MCF 10A (cell line): ENCODE measurements at regions of chr7 and their contacts with region 1.

Region 1: DNA sequence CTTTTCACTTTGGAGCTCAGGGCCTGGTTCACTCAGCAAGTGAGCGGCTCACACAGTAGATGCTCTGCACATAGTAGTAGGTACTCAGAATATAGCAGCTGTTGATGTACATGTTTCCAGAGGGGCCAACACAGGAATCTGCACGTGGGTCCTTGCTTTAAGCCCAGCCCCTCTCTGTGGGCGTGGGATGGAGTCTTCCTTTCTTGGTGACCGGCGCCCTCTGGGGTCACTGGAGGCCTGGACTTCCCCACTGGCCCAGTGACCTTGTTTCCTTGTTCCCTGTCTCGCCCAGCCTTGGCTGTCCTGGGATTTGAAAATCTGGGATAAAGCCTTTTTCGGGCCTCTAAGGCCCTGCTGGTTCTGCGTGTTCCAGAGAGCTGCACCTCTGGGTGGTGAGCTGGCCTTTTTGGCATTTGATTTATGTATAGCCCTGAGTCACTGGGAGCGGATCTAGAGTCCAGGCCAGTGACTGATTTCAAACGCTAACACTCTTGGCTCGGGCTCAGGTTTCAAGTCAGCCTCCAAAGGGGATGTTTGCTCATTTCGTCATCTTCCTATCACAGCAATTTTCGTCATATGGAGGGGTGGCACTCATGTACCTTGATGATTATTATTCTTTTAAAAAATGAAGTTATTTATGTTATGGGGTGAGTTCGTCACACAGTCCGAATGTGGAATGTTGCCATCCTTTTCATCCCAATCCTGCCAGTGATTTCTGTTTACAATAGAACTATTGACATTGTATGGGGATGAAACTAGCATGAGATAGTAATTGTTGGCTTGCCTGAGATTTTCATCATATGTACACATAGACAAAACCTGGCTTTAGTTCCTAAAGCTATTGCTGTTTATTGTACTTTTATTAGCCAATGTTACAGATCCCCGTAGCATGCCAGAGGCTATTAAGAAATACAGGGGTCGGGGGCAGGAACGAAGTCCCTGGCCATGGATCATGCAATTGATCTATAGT is 65.5 kb downstream of the CUX1 start:
- DNase-seq: peak; percentile 100
- H3K4me3 Mint-ChIP-seq: peak overlapping the region; percentile 41
- H3K27ac Mint-ChIP-seq: peak overlapping the region; percentile 99
- H3K4me1 Mint-ChIP-seq: peaks cover 30% of the 10 kb centered on the region
- H3K27me3 Mint-ChIP-seq: no peaks in the 10 kb centered on the region
- CTCF ChIP-seq: no peak

Region 2: GRCh38 chr7:101815835-101816493 is 66.9 kb before region 1 on chr7:
- CTCF ChIA-PET with region 1: interaction called, 3 read pairs
- POLR2A ChIA-PET with region 1: interaction called, 6 read pairs
- intact Hi-C with region 1: loop called (anchors 2 kb)
- DNase-seq: peak; percentile 79
- H3K4me3 Mint-ChIP-seq: peak overlapping the region; percentile 78
- H3K27ac Mint-ChIP-seq: no peak overlapping the region
- H3K4me1 Mint-ChIP-seq: peaks cover 21% of the 10 kb centered on the region
- H3K27me3 Mint-ChIP-seq: no peaks in the 10 kb centered on the region
- CTCF ChIP-seq: no peak

Region 3: DNA sequence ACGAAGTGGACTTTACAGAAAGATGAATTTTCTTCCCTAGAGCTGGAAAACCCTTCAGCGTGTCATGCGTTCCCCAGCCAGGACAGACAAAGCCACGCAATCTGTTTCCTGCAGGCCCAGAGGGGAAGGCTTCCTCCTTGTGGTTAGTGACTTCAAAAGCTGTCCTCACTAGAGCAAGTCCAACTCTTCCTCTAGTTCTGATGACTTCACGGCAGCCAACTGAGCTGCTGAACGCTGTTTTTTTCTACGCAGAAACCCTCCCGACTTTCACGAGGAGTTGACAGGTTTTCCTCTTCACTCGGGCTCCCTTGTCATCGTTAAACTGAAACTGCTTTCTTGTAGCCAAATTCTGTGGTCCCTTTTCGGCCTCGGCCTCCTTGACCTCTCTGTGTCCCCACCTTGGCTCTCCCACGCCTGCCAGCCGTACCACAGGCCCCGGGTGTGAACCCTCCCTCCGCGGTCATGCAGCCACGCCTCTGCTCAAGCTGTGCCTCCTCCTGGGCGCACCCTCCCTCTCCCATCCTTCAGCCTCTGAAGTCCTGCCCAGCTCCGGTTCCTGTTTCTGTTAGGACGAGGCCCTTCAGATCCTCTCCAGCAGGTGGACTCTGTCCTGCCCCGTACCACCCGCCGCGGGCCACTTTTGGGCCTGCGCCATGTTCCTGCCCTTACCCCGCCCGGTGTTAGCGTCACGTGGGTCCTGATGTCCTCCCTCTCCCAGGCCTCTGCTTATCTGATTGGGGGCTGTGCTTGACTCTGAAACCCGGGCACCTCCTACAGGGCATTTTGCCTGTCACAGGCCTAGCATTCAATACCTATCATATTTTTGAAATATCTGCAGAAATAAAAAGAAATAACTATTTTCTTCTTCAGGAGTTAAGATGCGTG is 26.2 kb before region 1 on chr7:
- CTCF ChIA-PET with region 1: interaction called, 4 read pairs
- POLR2A ChIA-PET with region 1: interaction called, 17 read pairs
- intact Hi-C with region 1: loop called (anchors 2 kb)
- DNase-seq: peak; percentile 95
- H3K4me3 Mint-ChIP-seq: peak overlapping the region; percentile 70
- H3K27ac Mint-ChIP-seq: peak overlapping the region; percentile 74
- H3K4me1 Mint-ChIP-seq: peaks cover 32% of the 10 kb centered on the region
- H3K27me3 Mint-ChIP-seq: no peaks in the 10 kb centered on the region
- CTCF ChIP-seq: peak; percentile 53

Region 4: DNA sequence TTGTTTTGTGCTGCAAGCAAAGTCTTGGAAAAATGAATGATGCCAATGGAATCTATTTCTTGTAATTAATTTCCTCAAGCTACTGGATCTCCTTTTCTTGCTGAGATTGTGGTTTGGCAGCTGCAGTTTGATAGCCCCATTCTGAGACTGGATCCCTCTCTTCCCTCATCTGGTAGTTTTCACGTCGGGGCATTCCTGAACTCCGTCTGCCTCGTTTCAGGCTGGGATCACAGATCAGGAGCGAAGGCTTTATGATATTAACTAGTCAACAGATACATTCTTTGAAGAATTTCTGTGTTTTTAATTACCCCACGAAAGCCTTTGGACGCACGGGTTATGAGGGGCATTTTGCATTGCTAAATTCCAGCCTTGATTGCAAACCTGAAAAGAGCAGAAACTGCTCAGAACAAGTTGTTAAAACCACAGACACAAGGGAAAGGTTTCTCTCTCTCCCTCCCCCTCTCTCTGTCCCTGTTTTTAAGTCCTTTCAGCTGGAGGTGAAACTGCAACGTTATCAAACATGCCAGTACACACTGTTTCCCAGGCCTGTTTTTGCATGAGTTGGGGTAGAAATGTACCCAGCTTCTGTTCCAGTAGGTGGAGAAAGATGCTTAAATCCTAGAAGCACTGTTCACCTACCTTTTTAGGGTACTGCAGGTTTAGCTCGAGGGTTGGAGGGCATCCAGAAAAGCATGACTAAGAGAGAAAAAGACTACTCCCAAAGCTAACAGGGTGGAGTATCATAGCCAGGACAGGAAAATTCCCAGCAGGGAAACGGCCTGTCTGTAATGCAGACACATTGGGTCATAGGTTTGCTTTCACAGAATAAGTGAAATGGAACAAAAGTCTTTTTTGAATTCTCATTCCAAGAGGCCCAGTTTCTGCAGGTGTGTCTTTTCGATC is 58.9 kb after region 1 on chr7:
- CTCF ChIA-PET with region 1: interaction called, 4 read pairs
- POLR2A ChIA-PET with region 1: interaction called, 18 read pairs
- intact Hi-C with region 1: no loop called
- DNase-seq: peak; percentile 96
- H3K4me3 Mint-ChIP-seq: peak overlapping the region; percentile 45
- H3K27ac Mint-ChIP-seq: peak overlapping the region; percentile 64
- H3K4me1 Mint-ChIP-seq: peaks cover 23% of the 10 kb centered on the region
- H3K27me3 Mint-ChIP-seq: no peaks in the 10 kb centered on the region
- CTCF ChIP-seq: no peak

Region 5: GRCh38 chr7:102064361-102065025 is 181.6 kb after region 1 on chr7:
- CTCF ChIA-PET with region 1: interaction called, 4 read pairs
- POLR2A ChIA-PET with region 1: interaction called, 17 read pairs
- intact Hi-C with region 1: loop called (anchors 1 kb)
- DNase-seq: peak; percentile 84
- H3K4me3 Mint-ChIP-seq: peak overlapping the region; percentile 55
- H3K27ac Mint-ChIP-seq: peak overlapping the region; percentile 92
- H3K4me1 Mint-ChIP-seq: peaks cover 19% of the 10 kb centered on the region
- H3K27me3 Mint-ChIP-seq: no peaks in the 10 kb centered on the region
- CTCF ChIP-seq: no peak

Region 6: GRCh38 chr7:102125127-102125561 is 242.3 kb after region 1 on chr7:
- CTCF ChIA-PET with region 1: no interaction called
- POLR2A ChIA-PET with region 1: no interaction called
- intact Hi-C with region 1: loop called (anchors 5 kb)
- DNase-seq: peak; percentile 89
- H3K4me3 Mint-ChIP-seq: no peak overlapping the region
- H3K27ac Mint-ChIP-seq: no peak overlapping the region
- H3K4me1 Mint-ChIP-seq: peaks cover 4% of the 10 kb centered on the region
- H3K27me3 Mint-ChIP-seq: no peaks in the 10 kb centered on the region
- CTCF ChIP-seq: no peak

Region 7: GRCh38 chr7:102152672-102153585 is 270.0 kb after region 1 on chr7:
- CTCF ChIA-PET with region 1: interaction called, 7 read pairs
- POLR2A ChIA-PET with region 1: interaction called, 4 read pairs
- intact Hi-C with region 1: loop called (anchors 1 kb)
- DNase-seq: peak; percentile 89
- H3K4me3 Mint-ChIP-seq: peak overlapping the region; percentile 52
- H3K27ac Mint-ChIP-seq: peak overlapping the region; percentile 96
- H3K4me1 Mint-ChIP-seq: peaks cover 24% of the 10 kb centered on the region
- H3K27me3 Mint-ChIP-seq: no peaks in the 10 kb centered on the region
- CTCF ChIP-seq: no peak